Caki2 (cell line): ENCODE measurements at regions of chr22 and their contacts with region 1.

Region 1: GRCh38 chr22:33209930-33210784 is 152.0 kb upstream of the SYN3 start:
- DNase-seq: peak; percentile 35

Region 2: GRCh38 chr22:32932176-32932575 is 278.0 kb before region 1 on chr22:
- in situ Hi-C with region 1: no loop called
- DNase-seq: peak; percentile 55

Region 3: DNA sequence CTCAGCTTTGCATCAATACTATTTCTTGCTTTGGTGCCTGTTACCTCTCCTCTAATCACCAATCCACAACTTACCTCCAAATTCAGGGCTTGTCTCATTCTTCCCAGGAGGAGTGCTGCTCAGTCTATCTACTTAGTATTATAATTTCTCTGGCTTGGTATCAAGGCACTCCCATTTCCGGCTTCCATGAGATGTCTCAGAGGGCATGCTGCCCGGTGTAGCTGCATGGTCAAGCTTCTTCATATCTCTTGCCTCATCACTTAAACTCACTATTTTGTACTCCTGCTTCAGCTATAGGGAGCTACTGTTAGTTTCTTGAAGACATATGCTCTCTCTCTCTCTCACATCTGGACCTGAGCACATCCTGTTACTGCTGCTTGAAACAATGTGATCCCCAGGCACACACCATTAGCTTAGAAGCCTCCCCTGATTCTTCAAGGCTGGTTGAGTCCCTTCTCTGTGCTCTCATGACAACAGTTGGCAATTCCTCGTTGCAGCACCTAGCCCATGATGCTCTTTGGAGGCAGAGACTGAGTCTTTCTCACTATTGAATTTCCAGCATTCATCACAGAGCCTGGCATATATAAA is 30.8 kb after region 1 on chr22:
- in situ Hi-C with region 1: loop called (anchors 5 kb)
- DNase-seq: no peak

Region 4: GRCh38 chr22:33271390-33272161 is 61.4 kb after region 1 on chr22:
- in situ Hi-C with region 1: no loop called
- DNase-seq: no peak

Region 5: DNA sequence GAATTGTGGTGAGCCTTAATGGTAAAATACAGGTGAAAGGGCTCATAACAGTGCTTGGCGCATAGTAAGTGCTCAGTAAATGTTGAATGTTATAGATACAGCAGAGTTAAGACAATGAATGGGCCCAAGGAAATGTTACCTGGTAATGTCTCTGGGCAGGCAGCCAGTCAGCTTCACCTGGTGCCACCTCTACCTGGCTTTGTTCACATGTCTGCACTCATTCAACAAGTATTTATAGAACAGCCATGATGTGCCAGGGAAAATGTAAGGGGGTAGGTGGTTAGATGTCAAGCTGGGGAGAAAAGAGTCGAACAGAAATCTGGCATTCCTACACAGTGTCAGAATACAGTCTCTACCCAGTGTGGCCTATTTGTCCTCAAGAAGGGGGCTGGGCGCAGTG is 86.8 kb after region 1 on chr22:
- in situ Hi-C with region 1: no loop called
- DNase-seq: no peak